ENCODE measurements at regions of chr3 and their contacts with region 1.

Region 1: GRCh38 chr3:3200632-3201212 is 21.2 kb upstream of the CRBN start:
- DNase-seq: no peak
- H3K4me3 ChIP-seq: no peak overlapping the region
- H3K27ac ChIP-seq: no peak overlapping the region
- H3K4me1 ChIP-seq: peaks cover 0 to 14% (median 12%) of the 10 kb centered on the region in 6 donors
- H3K27me3 ChIP-seq: no peaks in the 10 kb centered on the region
- CTCF ChIP-seq: peak; percentile 45 to 80 (median 76)
- POLR2A ChIP-seq: no peak

Region 2: GRCh38 chr3:3074551-3075257 is 126.0 kb before region 1 on chr3:
- intact Hi-C with region 1: no loop called
- DNase-seq: no peak
- H3K4me3 ChIP-seq: no peak overlapping the region
- H3K27ac ChIP-seq: no peak overlapping the region
- H3K4me1 ChIP-seq: no peaks in the 10 kb centered on the region
- H3K27me3 ChIP-seq: no peaks in the 10 kb centered on the region
- CTCF ChIP-seq: no peak
- POLR2A ChIP-seq: no peak

Region 3: DNA sequence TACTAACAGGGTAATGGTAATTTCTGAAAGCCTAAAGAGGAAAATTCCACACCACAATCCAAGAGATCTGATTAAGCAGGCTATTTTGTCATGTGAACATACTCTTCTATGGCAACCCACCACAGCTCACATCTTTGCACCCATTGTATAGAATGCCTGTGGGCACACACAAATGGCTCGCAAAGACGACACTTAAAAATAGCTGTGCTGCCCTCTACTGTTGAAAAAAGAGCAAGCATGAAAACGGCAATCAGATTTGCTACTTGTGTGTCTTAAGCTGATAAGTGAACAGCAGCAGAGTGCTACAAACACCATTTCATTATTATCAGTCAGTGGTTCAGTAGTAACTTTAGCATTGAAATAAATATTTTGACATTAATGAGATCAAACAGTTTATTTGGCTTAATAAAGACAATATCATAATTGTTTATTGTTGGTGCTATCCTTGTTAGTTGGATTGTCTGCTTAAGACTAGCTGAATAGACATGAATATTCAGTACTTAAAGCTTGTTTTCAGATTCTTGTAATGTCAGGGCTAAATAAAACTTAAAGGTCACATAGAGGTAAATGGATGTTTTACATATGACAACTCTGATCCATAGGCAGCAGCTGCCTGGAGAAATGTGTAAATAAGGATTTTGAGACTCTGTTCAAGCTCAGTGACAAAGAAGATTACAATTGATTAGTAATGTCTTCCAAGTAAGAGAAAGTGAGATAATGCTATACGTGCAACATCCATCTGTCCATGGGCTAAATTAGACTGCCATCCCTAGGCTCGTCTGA is 797.6 kb after region 1 on chr3:
- intact Hi-C with region 1: loop called (anchors 10 kb)
- DNase-seq: no peak
- H3K4me3 ChIP-seq: no peak overlapping the region
- H3K27ac ChIP-seq: no peak overlapping the region
- H3K4me1 ChIP-seq: no peaks in the 10 kb centered on the region
- H3K27me3 ChIP-seq: no peaks in the 10 kb centered on the region
- CTCF ChIP-seq: peak in 9 of 11 experiments; percentile 28 to 74 (median 59)
- POLR2A ChIP-seq: no peak

Region 4: DNA sequence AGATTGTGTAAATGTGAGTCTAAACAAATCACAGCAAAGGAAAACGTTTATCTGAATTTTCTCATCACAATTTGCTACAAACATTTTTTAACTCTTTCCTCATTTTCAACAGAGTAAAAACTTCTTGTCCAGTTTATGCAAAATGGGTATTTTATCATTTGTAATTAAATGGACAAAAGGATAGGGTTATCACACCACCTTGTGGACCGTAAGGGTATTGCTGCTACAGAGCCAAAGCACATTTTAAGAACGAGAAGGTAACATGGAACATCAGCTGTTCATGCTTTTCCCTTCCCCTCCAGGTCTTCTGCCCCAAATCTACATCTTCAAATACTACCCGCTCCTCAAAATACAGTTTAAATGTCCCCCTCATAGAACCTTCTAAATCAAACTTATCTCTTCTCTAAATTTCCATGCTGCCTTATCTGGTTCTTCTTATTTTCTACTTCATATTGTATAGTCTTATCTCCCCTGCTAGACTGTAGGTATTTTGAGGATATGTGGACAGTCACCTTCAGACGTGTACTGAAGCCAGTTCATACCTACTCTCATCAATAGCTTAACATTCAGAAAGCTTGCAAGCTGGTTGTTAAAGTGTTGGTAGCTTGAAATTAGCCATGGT is 1089.7 kb after region 1 on chr3:
- intact Hi-C with region 1: loop called (anchors 5 kb)
- DNase-seq: no peak
- H3K4me3 ChIP-seq: no peak overlapping the region
- H3K27ac ChIP-seq: no peak overlapping the region
- H3K4me1 ChIP-seq: peaks cover 0 to 2% (median 0%) of the 10 kb centered on the region in 6 donors
- H3K27me3 ChIP-seq: no peaks in the 10 kb centered on the region
- CTCF ChIP-seq: peak; percentile 77 to 94 (median 89)
- POLR2A ChIP-seq: no peak